PC-9 (cell line): ENCODE measurements at regions of chr17 and their contacts with region 1.

Region 1: GRCh38 chr17:75405365-75406221 is at the start of gene GRB2:
- DNase-seq: peak; percentile 84 to 99
- H3K4me3 ChIP-seq: peak within 1 kb of the TSS; percentile 82
- H3K27ac ChIP-seq: peak within 1 kb of the TSS; percentile 35
- H3K4me1 ChIP-seq: peaks cover 11% of the 10 kb centered on the region
- H3K27me3 ChIP-seq: no peaks in the 10 kb centered on the region
- CTCF ChIP-seq: no peak
- total RNA-seq, gene GRB2: 75.3 and 81.3 TPM in 2 replicates

Region 2: GRCh38 chr17:75289115-75289831 is 116.3 kb before region 1 on chr17 and contains the start of gene SLC25A19:
- CTCF ChIA-PET with region 1: interaction called, 5 read pairs
- POLR2A ChIA-PET with region 1: interaction called, 5 read pairs
- intact Hi-C with region 1: loop called (anchors 1 kb)
- DNase-seq: peak; percentile 97
- H3K4me3 ChIP-seq: peak within 1 kb of the TSS; percentile 65
- H3K27ac ChIP-seq: peak within 1 kb of the TSS; percentile 48
- H3K4me1 ChIP-seq: peaks cover 4% of the 10 kb centered on the region
- H3K27me3 ChIP-seq: no peaks in the 10 kb centered on the region
- CTCF ChIP-seq: no peak
- total RNA-seq, gene SLC25A19: 18.7 and 19.4 TPM in 2 replicates

Region 3: GRCh38 chr17:76397687-76398487 is 992.3 kb after region 1 on chr17:
- CTCF ChIA-PET with region 1: no interaction called
- POLR2A ChIA-PET with region 1: no interaction called
- intact Hi-C with region 1: no loop called
- DNase-seq: peak; percentile 59 to 84
- H3K4me3 ChIP-seq: no peak overlapping the region
- H3K27ac ChIP-seq: no peak overlapping the region
- H3K4me1 ChIP-seq: no peaks in the 10 kb centered on the region
- H3K27me3 ChIP-seq: no peaks in the 10 kb centered on the region
- CTCF ChIP-seq: peak; percentile 89